HEK293 (cell line): ENCODE measurements at regions of chr3 and their contacts with region 1.

Region 1: GRCh38 chr3:49839193-49839809 is 17.1 kb downstream of the TRAIP start:
- H3K4me3 ChIP-seq: no peak overlapping the region
- H3K27ac ChIP-seq: no peak overlapping the region
- H3K4me1 ChIP-seq: no peaks in the 10 kb centered on the region
- CTCF ChIP-seq: peak; percentile 40; the same call in 1 of the 2 replicates

Region 2: GRCh38 chr3:49703443-49703927 is 135.8 kb before region 1 on chr3:
- CTCF ChIA-PET with region 1: interaction called, 36 read pairs
- POLR2A ChIA-PET with region 1: interaction called, 7 read pairs
- H3K4me3 ChIP-seq: no peak overlapping the region
- H3K27ac ChIP-seq: no peak overlapping the region
- H3K4me1 ChIP-seq: no peaks in the 10 kb centered on the region
- CTCF ChIP-seq: peak; percentile 84

Region 3: GRCh38 chr3:49802719-49803464 is 36.4 kb before region 1 on chr3 and contains the start of gene INKA1:
- CTCF ChIA-PET with region 1: interaction called, 29 read pairs
- POLR2A ChIA-PET with region 1: interaction called, 4 read pairs
- H3K4me3 ChIP-seq: peak within 1 kb of the TSS; percentile 84
- H3K27ac ChIP-seq: no peak within 1 kb of the TSS
- H3K4me1 ChIP-seq: no peaks in the 10 kb centered on the region
- CTCF ChIP-seq: peak; percentile 93

Region 4: GRCh38 chr3:49813497-49814174 is 25.7 kb before region 1 on chr3 and contains the start of gene UBA7:
- CTCF ChIA-PET with region 1: interaction called, 15 read pairs
- POLR2A ChIA-PET with region 1: no interaction called
- H3K4me3 ChIP-seq: no peak within 1 kb of the TSS
- H3K27ac ChIP-seq: no peak within 1 kb of the TSS
- H3K4me1 ChIP-seq: no peaks in the 10 kb centered on the region
- CTCF ChIP-seq: no peak

Region 5: DNA sequence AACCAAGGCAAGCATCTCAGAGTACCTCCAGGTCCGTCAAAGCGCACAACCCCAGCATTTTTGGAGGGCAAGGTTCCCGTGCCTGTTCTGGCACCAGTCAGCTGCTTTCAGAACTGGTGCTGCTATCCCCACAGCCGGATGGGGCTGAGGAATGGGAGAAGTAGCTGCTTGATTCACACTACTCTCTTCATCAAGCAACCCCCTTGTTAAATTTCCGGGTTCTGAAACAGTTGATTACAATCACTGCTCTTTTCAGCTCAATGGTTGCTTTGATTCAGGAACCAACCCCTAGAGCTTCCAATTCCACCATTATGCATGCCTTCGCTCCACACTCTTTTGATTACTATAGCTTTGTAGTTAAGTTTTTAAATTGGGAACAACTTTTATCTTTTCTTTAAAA is 13.3 kb before region 1 on chr3:
- CTCF ChIA-PET with region 1: interaction called, 15 read pairs
- POLR2A ChIA-PET with region 1: no interaction called
- H3K4me3 ChIP-seq: no peak overlapping the region
- H3K27ac ChIP-seq: no peak overlapping the region
- H3K4me1 ChIP-seq: no peaks in the 10 kb centered on the region
- CTCF ChIP-seq: no peak